Endothelial cell of umbilical vein (primary cell): ENCODE measurements at regions of chr21 and their contacts with region 1.

Region 1: DNA sequence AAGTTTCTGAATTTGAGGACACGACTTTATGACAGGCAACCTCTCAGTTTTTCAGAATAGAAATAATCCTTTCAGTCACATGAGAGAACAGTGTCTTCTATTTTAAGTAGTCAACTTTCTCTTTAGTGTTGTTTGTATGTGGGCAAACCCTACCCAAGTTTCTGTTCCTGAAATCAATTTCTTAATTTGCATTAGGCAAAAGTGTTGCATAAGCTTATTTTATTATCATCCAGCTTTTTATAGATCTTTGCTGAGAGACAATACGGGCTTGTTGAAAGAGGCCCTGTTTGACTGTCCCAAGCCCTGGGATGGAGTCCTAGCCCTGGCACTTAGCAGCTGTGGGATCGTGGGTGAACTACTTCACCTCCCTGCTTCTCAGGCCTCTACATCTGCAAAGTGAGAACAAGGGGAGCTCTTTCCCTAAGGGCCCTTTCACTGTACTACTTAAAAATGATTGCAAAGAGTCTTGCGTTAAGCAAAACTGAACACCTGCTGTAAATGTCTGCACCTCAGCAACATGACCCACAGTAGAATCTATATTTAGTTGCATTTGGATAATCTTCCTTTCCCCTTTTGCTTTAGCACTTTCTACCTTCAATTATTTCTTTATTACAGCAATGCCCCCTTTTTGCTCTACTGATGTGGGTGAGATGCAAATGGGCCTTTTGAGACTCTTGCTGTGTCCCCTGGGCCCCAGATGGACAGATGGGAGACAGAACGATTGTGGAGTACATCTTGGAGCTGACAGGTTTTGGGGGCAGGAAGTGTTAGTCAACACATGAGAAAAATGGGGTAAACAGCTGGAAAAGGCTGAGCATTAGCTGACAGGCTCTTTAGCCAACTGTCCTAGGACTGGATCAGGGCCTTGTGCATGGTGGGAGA is 41.0 kb upstream of the SCAF4 start:
- DNase-seq: no peak
- H3K4me3 ChIP-seq: no peak overlapping the region
- H3K27ac ChIP-seq: no peak overlapping the region
- H3K4me1 ChIP-seq: no peaks in the 10 kb centered on the region
- H3K27me3 ChIP-seq: no peaks in the 10 kb centered on the region
- CTCF ChIP-seq: no peak
- POLR2A ChIP-seq: no peak

Region 2: DNA sequence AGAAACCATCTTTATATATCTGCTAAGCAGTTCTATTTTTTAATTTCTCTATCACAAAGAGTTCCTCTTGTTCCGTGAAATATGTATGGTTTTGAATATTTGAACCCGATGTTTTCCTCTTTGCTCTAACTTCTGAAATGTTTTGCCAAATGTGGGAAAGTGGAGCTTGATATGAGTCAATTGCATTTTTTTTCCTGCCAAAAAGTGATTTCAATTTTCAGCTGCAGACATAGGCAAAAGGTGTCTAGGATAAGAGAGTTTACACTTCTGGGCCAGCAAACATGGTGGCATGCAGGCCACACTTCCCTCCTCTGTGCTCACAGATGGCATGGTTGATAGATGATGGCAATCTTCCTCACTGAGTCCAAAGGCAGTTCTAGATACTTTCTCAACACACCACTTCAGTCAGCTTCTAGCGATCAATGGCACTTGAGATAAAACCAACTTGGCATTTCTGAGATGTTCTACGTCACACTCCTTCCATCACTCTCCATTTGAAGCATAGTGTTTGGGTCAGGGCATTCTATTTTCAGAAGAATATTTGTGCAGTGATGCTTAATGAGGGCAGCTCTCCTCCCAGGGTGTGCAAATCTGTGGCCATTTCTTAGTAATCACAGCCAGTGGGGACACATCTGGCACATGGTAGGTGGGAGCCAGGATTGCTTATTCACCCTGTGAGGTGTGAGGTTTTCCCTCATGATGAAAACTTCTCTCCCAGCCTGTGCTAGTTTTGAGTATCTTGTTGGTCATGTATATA is 13.4 kb after region 1 on chr21:
- CTCF ChIA-PET with region 1: interaction called, 10 read pairs
- POLR2A ChIA-PET with region 1: no interaction called
- dilution Hi-C with region 1: no loop called
- intact Hi-C with region 1: no loop called
- DNase-seq: no peak
- H3K4me3 ChIP-seq: no peak overlapping the region
- H3K27ac ChIP-seq: no peak overlapping the region
- H3K4me1 ChIP-seq: no peaks in the 10 kb centered on the region
- H3K27me3 ChIP-seq: no peaks in the 10 kb centered on the region
- CTCF ChIP-seq: no peak
- POLR2A ChIP-seq: no peak